Activated CD4-positive, alpha-beta memory T cell treated with anti-CD3 and anti-CD28 coated beads for 36 hours (primary cell): ENCODE measurements at regions of chr1 and their contacts with region 1.

Region 1: DNA sequence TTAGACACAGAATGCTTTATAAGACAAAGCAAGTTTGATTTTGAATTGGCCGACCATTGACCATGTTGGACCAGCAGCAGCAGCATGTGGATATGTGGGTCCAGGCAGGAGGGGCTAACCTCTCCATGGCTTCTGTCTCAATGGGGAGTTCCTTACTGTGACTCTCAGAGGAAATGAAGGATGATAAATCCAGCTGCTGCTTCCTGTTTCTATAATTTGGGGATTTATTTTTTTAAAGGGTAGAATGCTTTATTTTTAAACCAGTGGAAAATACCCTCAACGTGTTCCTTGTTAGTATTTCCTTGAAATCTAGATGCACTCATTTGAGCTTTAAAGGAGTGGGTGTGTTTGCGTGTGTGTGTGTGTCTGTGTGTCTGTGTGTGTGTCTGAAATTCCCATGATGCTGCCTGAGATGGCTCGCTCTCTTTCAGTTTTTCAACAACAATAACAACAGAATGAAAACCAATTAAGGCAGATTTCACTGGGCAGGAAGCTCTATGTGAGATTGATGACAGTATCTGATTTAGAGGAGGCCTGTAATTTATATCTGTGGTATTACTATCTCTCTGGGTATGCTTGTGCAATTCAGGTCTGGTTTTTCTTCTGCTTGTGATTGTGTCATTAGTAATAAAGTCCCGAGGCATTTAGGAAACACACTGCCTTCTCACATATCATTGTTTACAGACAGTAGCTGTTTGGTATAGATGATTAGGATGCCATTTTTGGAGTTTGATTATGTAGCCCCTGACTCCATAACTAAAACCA is 86.1 kb upstream of the ZNF326 start:
- DNase-seq: no peak
- H3K4me3 Mint-ChIP-seq: no peak overlapping the region
- H3K27ac Mint-ChIP-seq: peak overlapping the region; percentile 47
- H3K4me1 Mint-ChIP-seq: peaks cover 49% of the 10 kb centered on the region
- H3K27me3 Mint-ChIP-seq: no peaks in the 10 kb centered on the region

Region 2: GRCh38 chr1:89820422-89821321 is 88.2 kb before region 1 on chr1 and contains the start of gene LRRC8D:
- CTCF ChIA-PET with region 1: no interaction called
- POLR2A ChIA-PET with region 1: no interaction called
- intact Hi-C with region 1: loop called (anchors 1 kb)
- DNase-seq: peak; percentile 86
- H3K4me3 Mint-ChIP-seq: peak within 1 kb of the TSS; percentile 85
- H3K27ac Mint-ChIP-seq: peak within 1 kb of the TSS; percentile 55
- H3K4me1 Mint-ChIP-seq: peaks cover 26% of the 10 kb centered on the region
- H3K27me3 Mint-ChIP-seq: no peaks in the 10 kb centered on the region
- total RNA-seq, gene LRRC8D: 17.7 to 19.4 TPM